ENCODE measurements at regions of chr10 and their contacts with region 1.

Region 1: GRCh38 chr10:103712570-103713498 is 142.5 kb downstream of the SH3PXD2A start:
- DNase-seq: peak; percentile 53 to 98
- H3K4me3 ChIP-seq: no peak overlapping the region
- H3K27ac ChIP-seq: no peak overlapping the region
- H3K4me1 ChIP-seq: peaks cover 0 to 3% (median 1%) of the 10 kb centered on the region in 4 experiments; a peak in 2 of 7 replicates
- H3K27me3 ChIP-seq: no peaks in the 10 kb centered on the region
- CTCF ChIP-seq: peak; percentile 68 to 96 (median 93)
- EP300 ChIP-seq: no peak
- POLR2A ChIP-seq: no peak
- RAD21 ChIP-seq: peak; percentile 99

Region 2: DNA sequence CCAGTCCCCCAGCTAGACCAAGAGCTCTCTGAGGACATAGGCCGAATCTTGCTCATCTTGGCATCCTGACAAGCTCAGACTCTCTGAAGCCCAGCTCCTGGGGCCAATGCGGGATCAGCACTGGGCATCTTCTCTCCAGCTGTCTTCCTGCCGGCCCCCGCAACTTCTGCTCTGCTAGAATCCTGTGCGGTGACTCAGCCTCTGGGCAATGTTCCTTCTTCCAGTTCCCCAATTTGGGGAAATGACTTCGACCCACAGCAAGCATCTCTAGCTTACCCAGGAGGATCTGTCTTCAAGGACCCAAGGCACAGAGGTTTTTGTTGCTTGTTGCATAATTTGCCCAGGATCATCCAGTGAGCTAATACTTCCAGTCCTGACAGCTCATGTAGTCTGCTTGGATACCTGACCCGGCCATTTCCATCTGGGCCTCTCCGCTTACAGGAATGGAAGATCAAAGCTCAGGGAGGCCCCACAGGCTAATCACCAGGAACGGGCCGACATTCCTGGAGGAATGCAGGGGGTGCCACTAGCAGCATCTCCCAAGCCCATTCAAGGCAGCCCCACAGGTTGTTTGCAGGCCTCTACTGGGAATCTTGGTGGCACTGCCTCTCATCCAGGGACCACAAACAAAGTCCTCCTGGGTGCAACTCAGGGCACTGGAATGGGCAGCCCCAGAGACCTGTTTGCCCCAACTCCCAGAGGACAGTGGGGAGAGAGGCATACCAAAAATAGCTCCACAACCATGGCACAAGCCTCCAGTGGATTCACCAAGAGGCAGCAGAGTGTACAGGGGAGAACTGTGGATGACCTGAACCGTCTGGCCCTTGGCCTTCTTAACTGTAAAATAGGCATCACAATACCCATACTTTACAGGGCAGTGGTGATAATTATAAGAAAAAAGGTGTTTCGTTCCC is 67.4 kb before region 1 on chr10:
- CTCF ChIA-PET with region 1: no interaction called
- POLR2A ChIA-PET with region 1: no interaction called
- DNase-seq: no peak
- H3K4me3 ChIP-seq: no peak overlapping the region
- H3K27ac ChIP-seq: no peak overlapping the region
- H3K4me1 ChIP-seq: peaks cover 0 to 24% (median 12%) of the 10 kb centered on the region in 4 experiments; a peak in 6 of 7 replicates
- H3K27me3 ChIP-seq: no peaks in the 10 kb centered on the region
- CTCF ChIP-seq: no peak
- EP300 ChIP-seq: no peak
- POLR2A ChIP-seq: no peak
- RAD21 ChIP-seq: no peak

Region 3: DNA sequence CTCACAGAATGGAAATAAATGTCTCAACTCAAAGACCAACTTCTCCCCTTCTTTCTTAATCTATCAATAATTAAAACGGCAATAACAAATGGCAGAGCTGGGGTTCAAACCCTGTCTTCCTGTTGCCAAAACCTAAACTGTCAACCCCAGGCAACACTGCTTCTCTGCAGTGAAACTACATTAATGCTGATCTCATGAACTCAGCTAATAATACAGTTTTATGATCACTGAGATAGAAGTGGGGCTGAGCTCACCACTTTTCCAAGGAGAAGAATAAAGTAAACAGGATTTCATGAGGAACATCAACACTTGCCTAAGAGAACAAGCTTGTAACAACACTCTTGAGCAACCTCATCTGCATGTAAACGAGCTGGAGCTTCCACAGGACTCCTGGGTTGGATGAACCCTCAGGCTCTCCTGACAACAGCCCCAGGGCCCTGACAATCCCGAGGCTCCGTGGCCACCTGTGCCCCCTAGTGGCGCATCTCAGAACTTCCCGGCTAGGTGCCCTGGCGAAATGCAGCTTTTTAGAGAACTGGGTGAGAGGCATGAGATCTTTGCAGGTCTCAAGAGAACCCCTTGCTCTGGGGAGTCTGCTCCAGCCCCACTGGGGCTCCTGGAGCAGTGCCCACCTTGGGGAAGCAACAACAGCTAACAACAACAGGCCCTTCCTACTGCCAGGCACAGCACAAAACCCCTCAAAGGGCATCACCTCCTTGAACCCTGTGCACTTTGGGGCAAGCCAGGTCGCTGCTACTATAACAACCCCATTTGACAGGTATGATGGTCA is 26.8 kb before region 1 on chr10:
- CTCF ChIA-PET with region 1: interaction called, 14 read pairs
- POLR2A ChIA-PET with region 1: no interaction called
- DNase-seq: peak; percentile 50 to 97
- H3K4me3 ChIP-seq: no peak overlapping the region
- H3K27ac ChIP-seq: no peak overlapping the region
- H3K4me1 ChIP-seq: peaks cover 0 to 10% (median 4%) of the 10 kb centered on the region in 4 experiments; a peak in 3 of 7 replicates
- H3K27me3 ChIP-seq: peaks cover 0 to 4% (median 0%) of the 10 kb centered on the region in 4 experiments; a peak in 1 of 7 replicates
- CTCF ChIP-seq: peak; percentile 96 to 98 (median 97)
- EP300 ChIP-seq: no peak
- POLR2A ChIP-seq: no peak
- RAD21 ChIP-seq: peak; percentile 92 to 98

Region 4: GRCh38 chr10:103739039-103739764 is 26.4 kb after region 1 on chr10:
- CTCF ChIA-PET with region 1: interaction called, 47 read pairs
- POLR2A ChIA-PET with region 1: no interaction called
- DNase-seq: no peak
- H3K4me3 ChIP-seq: peak overlapping the region in 1 of 4 experiments; percentile 8; a peak in 2 of 8 replicates
- H3K27ac ChIP-seq: no peak overlapping the region
- H3K4me1 ChIP-seq: peaks cover 0 to 9% (median 2%) of the 10 kb centered on the region in 4 experiments; a peak in 3 of 7 replicates
- H3K27me3 ChIP-seq: no peaks in the 10 kb centered on the region
- CTCF ChIP-seq: no peak
- EP300 ChIP-seq: no peak
- POLR2A ChIP-seq: no peak
- RAD21 ChIP-seq: no peak

Region 5: DNA sequence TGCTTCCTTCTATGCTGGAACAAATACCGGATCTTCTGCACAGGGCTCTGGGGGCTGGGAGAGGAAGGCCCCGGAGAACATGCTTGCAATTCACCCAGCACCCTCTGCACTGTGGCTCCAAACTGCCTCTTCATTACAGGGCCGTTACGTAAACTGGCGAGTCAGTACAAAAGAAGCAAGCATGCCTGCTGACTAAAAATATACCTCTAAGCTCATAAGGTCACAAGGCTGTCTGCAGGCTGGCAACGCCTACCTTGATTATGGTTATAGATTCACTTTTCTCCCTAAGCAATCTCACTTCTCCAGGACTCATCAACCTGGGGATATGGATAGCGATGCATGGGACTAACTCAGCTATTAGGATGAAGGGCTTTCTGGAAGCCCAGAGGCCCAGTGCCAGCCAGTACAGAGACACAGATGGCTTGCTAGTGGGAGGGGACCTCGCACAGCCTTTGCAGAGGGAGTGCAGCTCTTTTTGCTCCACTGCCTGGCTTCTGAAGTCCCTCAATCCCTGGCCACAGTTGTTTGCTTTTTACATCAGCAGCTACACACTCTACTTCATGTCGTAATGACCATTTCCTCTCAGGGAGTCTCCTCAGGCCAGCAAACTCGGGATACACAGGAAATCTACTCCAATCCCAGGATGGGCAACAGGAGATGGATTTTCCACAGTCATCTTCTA is 46.4 kb after region 1 on chr10:
- CTCF ChIA-PET with region 1: interaction called, 16 read pairs
- POLR2A ChIA-PET with region 1: no interaction called
- DNase-seq: no peak
- H3K4me3 ChIP-seq: no peak overlapping the region
- H3K27ac ChIP-seq: no peak overlapping the region
- H3K4me1 ChIP-seq: peaks cover 8 to 16% (median 12%) of the 10 kb centered on the region in 4 experiments
- H3K27me3 ChIP-seq: no peaks in the 10 kb centered on the region
- CTCF ChIP-seq: no peak
- EP300 ChIP-seq: no peak
- POLR2A ChIP-seq: no peak
- RAD21 ChIP-seq: no peak

Region 6: GRCh38 chr10:103814626-103815370 is 102.0 kb after region 1 on chr10:
- CTCF ChIA-PET with region 1: interaction called, 12 read pairs
- POLR2A ChIA-PET with region 1: no interaction called
- DNase-seq: no peak
- H3K4me3 ChIP-seq: no peak overlapping the region
- H3K27ac ChIP-seq: no peak overlapping the region
- H3K4me1 ChIP-seq: 0 out of 7 replicates have a peak, but pooled peaks cover 0 to 1% (median 0%) of the 10 kb centered on the region in 4 experiments
- H3K27me3 ChIP-seq: no peaks in the 10 kb centered on the region
- CTCF ChIP-seq: no peak
- EP300 ChIP-seq: no peak
- POLR2A ChIP-seq: no peak
- RAD21 ChIP-seq: no peak

Region 7: GRCh38 chr10:103859161-103860086 is 146.6 kb after region 1 on chr10:
- CTCF ChIA-PET with region 1: interaction called, 199 read pairs
- POLR2A ChIA-PET with region 1: interaction called, 4 read pairs
- DNase-seq: peak; percentile 46 to 84
- H3K4me3 ChIP-seq: no peak overlapping the region
- H3K27ac ChIP-seq: no peak overlapping the region
- H3K4me1 ChIP-seq: peaks cover 0 to 6% (median 3%) of the 10 kb centered on the region in 4 experiments; a peak in 5 of 7 replicates
- H3K27me3 ChIP-seq: peaks cover 0 to 21% (median 15%) of the 10 kb centered on the region in 4 experiments; a peak in 5 of 7 replicates
- CTCF ChIP-seq: peak; percentile 39 to 77 (median 77)
- EP300 ChIP-seq: no peak
- POLR2A ChIP-seq: no peak
- RAD21 ChIP-seq: peak; percentile 73 to 84

Measured in H1 (cell line).